Right ventricle myocardium inferior (tissue), 1 donor: ENCODE measurements at regions of chr12 and their contacts with region 1.

Region 1: DNA sequence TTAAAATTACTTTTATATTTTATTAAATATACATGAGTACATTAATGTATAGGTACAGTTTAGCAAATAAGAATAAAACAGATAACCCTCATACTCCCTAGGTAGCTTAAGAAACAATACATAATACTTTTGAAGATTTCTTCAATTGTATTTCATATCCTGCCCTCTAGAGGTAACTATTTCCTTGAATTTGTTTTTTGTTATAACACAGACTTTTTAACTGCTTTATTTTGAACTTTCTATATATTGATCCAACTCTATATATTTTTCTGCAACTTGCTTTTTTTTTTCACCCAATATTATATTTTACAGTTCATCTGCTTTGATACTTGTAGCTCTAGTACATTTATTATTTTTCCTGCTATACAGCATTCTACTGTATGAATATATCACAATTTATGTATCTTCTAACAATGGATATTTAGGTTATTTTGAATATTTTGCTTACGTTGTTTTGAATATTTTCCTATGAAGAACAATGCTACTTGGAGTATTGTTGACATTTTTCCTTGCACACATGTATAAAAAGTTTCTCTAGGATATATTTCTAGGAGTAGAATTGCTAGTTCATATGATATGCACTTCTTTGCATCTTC is 72.8 kb upstream of the ABCD2 start:
- DNase-seq: no peak
- ATAC-seq: no peak

Region 2: DNA sequence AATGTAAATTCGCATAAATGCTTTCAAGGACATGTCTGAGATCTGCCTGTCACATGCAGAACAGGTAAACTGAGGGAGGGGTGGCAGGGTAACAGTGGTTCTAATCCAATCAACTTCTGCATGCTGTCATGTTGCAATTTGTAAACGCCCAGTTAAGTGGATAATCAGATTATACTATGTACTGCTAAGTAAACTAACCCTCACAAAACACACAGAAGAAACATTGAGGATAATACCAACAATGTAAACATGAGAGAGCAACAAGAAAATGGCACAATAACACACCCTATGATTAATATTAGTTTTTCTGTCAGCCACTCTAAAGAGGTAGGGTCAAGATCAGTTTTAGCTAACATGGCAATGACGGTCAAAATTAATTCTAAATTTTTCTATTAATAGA is 373.2 kb before region 1 on chr12:
- intact Hi-C with region 1: loop called (anchors 10 kb)
- DNase-seq: no peak
- ATAC-seq: no peak

Region 3: GRCh38 chr12:39587225-39587624 is 105.1 kb before region 1 on chr12:
- intact Hi-C with region 1: loop called (anchors 2 kb)
- DNase-seq: no peak
- ATAC-seq: no peak

Region 4: DNA sequence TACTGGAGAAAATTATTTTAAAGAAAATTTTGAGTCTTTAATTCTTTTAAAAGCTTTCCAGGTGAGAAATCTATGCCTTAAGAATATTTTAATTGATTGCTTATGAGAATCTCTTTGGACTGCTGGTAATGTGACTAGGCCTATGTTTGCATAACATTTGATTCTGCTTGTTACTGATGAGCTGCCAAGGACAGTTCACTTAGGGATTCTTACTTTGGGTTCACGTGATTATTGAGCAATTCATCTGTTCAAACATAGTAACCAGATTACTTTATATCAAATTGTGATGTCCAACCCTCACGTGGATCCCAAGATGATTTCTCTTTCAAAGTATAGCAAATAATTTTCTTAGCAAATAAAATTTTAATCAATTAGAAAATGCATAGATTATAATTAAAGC is 45.4 kb before region 1 on chr12:
- intact Hi-C with region 1: no loop called
- DNase-seq: no peak
- ATAC-seq: no peak